PC-3 (cell line): ENCODE measurements at regions of chr3 and their contacts with region 1.

Region 1: GRCh38 chr3:98602078-98602678 is 8.8 kb upstream of the CPOX start:
- DNase-seq: peak; percentile 78
- ATAC-seq: peak; percentile 86
- H3K4me3 ChIP-seq: no peak overlapping the region
- H3K27ac ChIP-seq: no peak overlapping the region
- H3K4me1 ChIP-seq: no peaks in the 10 kb centered on the region
- H3K27me3 ChIP-seq: no peaks in the 10 kb centered on the region
- CTCF ChIP-seq: peak; percentile 96

Region 2: GRCh38 chr3:98705706-98706105 is 103.5 kb after region 1 on chr3:
- CTCF ChIA-PET with region 1: interaction called, 7 read pairs
- POLR2A ChIA-PET with region 1: no interaction called
- intact Hi-C with region 1: loop called (anchors 1 kb)
- DNase-seq: peak; percentile 54
- ATAC-seq: peak; percentile 75
- H3K4me3 ChIP-seq: no peak overlapping the region
- H3K27ac ChIP-seq: no peak overlapping the region
- H3K4me1 ChIP-seq: 0 out of 2 replicates have a peak, but pooled peaks cover 5% of the 10 kb centered on the region
- H3K27me3 ChIP-seq: no peaks in the 10 kb centered on the region
- CTCF ChIP-seq: peak; percentile 66

Region 3: DNA sequence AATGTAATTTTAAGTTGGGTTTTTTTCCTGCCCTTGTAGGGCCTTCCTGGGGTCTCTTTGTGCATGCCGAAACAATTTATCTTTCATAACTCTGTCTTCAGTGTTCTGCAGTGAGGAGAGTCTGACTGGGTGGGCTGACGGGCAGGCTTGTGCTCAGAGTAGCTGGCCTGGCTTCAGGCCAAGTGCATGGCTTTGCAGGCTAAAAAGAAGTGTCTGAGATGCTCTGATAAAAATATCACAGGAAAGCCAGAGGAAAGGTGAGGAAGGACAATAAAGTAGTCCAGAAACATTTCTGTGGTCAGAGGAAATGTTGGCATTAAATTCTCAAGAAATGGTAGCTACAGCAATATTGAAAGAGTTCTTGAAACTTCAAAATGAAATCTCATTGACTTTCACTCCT is 186.5 kb after region 1 on chr3:
- CTCF ChIA-PET with region 1: no interaction called
- POLR2A ChIA-PET with region 1: no interaction called
- intact Hi-C with region 1: loop called (anchors 2 kb)
- DNase-seq: no peak
- ATAC-seq: no peak
- H3K4me3 ChIP-seq: no peak overlapping the region
- H3K27ac ChIP-seq: no peak overlapping the region
- H3K4me1 ChIP-seq: peaks cover 14% of the 10 kb centered on the region
- H3K27me3 ChIP-seq: no peaks in the 10 kb centered on the region
- CTCF ChIP-seq: no peak

Region 4: GRCh38 chr3:98986073-98986472 is 383.9 kb after region 1 on chr3:
- CTCF ChIA-PET with region 1: no interaction called
- POLR2A ChIA-PET with region 1: no interaction called
- intact Hi-C with region 1: loop called (anchors 2 kb)
- DNase-seq: peak; percentile 53
- ATAC-seq: no peak
- H3K4me3 ChIP-seq: no peak overlapping the region
- H3K27ac ChIP-seq: peak overlapping the region; percentile 65
- H3K4me1 ChIP-seq: peaks cover 52% of the 10 kb centered on the region
- H3K27me3 ChIP-seq: no peaks in the 10 kb centered on the region
- CTCF ChIP-seq: no peak